RWPE1 (cell line): ENCODE measurements at regions of chr13 and their contacts with region 1.

Region 1: DNA sequence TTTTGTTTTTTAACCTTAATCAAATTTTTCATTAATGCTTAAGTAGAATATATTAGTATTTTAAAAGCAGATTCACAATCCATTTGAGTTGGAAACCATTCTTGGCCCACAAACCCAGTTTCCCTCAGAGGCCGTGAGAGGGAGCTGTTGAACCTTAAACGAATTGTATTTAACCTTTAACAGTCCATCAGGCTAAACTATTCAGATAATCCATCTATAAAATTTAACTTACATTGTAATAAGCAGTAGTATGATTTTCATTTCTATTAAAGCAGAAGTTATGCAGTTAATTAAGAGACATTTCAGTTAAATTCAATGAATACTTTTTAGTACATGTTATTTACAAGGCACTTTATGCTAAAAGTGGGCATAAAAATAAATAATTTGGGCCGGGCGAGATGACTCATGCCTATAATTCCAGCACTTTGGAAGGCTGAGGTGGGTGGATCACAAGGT is 123.1 kb upstream of the C1QTNF9B start:
- DNase-seq: peak; percentile 56
- H3K27ac ChIP-seq: no peak overlapping the region
- CTCF ChIP-seq: peak; percentile 77

Region 2: GRCh38 chr13:24005755-24006281 is 14.6 kb before region 1 on chr13:
- CTCF ChIA-PET with region 1: interaction called, 11 read pairs
- POLR2A ChIA-PET with region 1: no interaction called
- DNase-seq: no peak
- H3K27ac ChIP-seq: no peak overlapping the region
- CTCF ChIP-seq: no peak

Region 3: GRCh38 chr13:24053519-24054251 is 33.3 kb after region 1 on chr13:
- CTCF ChIA-PET with region 1: interaction called, 10 read pairs
- POLR2A ChIA-PET with region 1: no interaction called
- DNase-seq: peak; percentile 68
- H3K27ac ChIP-seq: no peak overlapping the region
- CTCF ChIP-seq: peak; percentile 73

Region 4: DNA sequence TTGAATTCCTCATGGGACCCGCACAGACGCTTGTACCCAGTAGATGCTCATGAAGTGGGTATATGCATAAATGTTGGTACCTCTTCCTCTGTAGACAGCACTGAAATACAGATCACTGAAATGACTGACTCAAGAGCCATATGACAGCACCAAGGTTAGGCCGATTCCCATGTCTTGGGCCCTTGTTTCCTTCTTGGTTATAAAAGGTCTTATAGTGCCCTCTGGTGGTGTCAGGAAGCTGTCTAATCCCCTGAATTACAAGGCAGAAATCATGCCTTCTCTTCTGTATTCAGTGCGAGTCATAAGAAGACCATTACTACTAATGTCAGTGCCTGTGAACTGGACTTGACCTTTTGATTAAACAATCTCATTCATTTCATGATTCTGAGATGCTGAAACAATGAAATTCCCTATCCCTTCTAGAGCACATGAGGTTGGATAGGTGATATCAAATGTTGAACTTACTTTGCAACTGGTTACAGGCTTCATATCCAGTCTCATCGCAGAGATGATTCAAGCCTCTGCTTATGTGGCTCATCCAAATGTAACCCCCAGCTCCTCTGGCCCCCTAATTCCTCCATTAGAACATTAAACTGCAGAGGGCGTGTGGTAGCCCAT is 199.8 kb after region 1 on chr13:
- CTCF ChIA-PET with region 1: interaction called, 28 read pairs
- POLR2A ChIA-PET with region 1: interaction called, 3 read pairs
- DNase-seq: peak; percentile 60
- H3K27ac ChIP-seq: no peak overlapping the region
- CTCF ChIP-seq: peak; percentile 62

Region 5: DNA sequence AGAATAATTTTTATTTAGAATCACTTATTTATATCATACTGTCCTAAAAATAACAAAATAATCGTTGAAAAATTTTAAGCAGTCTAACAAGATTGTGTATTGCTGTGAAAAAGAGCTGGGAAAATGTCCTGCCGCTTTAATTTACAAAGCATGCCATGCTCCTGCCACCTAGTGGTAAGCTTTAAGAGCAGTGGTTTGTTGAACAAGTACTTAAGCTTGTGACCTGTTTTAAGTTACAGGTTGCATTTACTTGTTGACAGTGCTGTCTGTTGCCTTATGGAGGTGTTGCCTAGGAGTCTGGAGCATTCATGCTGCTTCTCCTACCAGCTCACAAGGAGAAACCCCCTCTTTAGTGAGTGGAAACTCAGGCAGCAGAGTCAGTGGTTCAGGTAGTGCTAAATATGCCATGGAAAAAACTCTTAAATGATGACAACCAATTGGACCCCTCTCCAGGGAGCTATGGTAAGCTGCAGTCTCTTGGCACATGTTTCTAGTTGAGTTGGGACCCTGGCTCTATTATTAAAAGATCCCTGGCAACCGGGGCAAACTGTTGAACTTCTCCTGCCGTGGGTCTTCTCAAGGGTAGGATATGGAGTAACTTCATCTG is 208.6 kb after region 1 on chr13:
- CTCF ChIA-PET with region 1: interaction called, 16 read pairs
- POLR2A ChIA-PET with region 1: no interaction called
- DNase-seq: peak; percentile 48
- H3K27ac ChIP-seq: no peak overlapping the region
- CTCF ChIP-seq: peak; percentile 88